Aorta (tissue), 5 donors: ENCODE measurements at regions of chr11 and their contacts with region 1.

Region 1: GRCh38 chr11:125345421-125346178 is 150.5 kb downstream of the FEZ1 start:
- DNase-seq: peak; percentile 86 to 92
- ATAC-seq: peak; percentile 86
- H3K4me3 ChIP-seq: no peak overlapping the region
- H3K27ac ChIP-seq: no peak overlapping the region
- H3K4me1 ChIP-seq: no peaks in the 10 kb centered on the region
- H3K27me3 ChIP-seq: no peaks in the 10 kb centered on the region

Region 2: GRCh38 chr11:125091247-125091876 is 254.2 kb before region 1 on chr11:
- intact Hi-C with region 1: no loop called
- DNase-seq: no peak
- ATAC-seq: peak; percentile 68
- H3K4me3 ChIP-seq: no peak overlapping the region
- H3K27ac ChIP-seq: no peak overlapping the region
- H3K4me1 ChIP-seq: peaks cover 0 to 3% of the 10 kb centered on the region in 2 donors
- H3K27me3 ChIP-seq: no peaks in the 10 kb centered on the region

Region 3: DNA sequence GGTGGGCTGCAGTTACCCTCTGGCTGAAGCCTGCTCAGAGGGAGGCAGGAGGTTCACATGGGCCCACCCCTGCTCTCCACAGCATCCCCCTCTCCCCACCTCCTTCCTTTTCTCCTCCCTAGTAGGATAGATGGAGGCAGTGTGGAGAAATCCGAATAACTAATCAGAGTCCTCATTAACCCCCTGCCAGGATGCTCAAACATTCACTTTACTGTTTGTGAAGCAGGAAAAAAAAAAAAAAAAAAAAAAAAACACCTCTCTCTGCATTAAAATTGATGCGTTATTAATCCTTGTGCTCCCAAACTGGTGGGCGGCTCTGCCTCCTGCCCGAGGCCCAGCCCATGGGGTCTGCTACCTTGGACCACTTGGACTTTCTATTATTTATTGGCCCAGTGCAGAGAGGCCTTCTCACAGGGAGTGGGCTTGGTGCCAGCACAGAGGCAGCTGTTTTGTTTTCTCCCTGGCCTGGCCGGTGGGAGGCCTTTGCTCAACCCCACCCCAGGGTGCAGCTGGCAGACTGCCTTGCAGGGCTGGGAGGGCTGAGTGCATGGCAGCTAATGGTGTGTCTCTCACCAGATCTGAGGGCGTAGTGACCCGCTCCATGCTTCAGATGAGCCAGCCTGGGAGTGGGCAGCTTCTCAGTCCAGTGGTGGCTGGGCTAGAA is 30.4 kb before region 1 on chr11:
- intact Hi-C with region 1: no loop called
- DNase-seq: no peak
- ATAC-seq: peak; percentile 40
- H3K4me3 ChIP-seq: no peak overlapping the region
- H3K27ac ChIP-seq: no peak overlapping the region
- H3K4me1 ChIP-seq: no peaks in the 10 kb centered on the region
- H3K27me3 ChIP-seq: no peaks in the 10 kb centered on the region

Region 4: GRCh38 chr11:125373426-125374391 is 28.1 kb after region 1 on chr11:
- intact Hi-C with region 1: loop called in 1 of 2 experiments (anchors 1 kb)
- DNase-seq: peak in 1 of 2 donors; percentile 57
- ATAC-seq: peak; percentile 11
- H3K4me3 ChIP-seq: no peak overlapping the region
- H3K27ac ChIP-seq: no peak overlapping the region
- H3K4me1 ChIP-seq: no peaks in the 10 kb centered on the region
- H3K27me3 ChIP-seq: no peaks in the 10 kb centered on the region

Region 5: GRCh38 chr11:125404776-125405435 is 59.3 kb after region 1 on chr11:
- intact Hi-C with region 1: loop called (anchors 5 kb)
- DNase-seq: peak; percentile 79 to 93
- ATAC-seq: peak; percentile 92
- H3K4me3 ChIP-seq: no peak overlapping the region
- H3K27ac ChIP-seq: no peak overlapping the region
- H3K4me1 ChIP-seq: no peaks in the 10 kb centered on the region
- H3K27me3 ChIP-seq: no peaks in the 10 kb centered on the region

Region 6: DNA sequence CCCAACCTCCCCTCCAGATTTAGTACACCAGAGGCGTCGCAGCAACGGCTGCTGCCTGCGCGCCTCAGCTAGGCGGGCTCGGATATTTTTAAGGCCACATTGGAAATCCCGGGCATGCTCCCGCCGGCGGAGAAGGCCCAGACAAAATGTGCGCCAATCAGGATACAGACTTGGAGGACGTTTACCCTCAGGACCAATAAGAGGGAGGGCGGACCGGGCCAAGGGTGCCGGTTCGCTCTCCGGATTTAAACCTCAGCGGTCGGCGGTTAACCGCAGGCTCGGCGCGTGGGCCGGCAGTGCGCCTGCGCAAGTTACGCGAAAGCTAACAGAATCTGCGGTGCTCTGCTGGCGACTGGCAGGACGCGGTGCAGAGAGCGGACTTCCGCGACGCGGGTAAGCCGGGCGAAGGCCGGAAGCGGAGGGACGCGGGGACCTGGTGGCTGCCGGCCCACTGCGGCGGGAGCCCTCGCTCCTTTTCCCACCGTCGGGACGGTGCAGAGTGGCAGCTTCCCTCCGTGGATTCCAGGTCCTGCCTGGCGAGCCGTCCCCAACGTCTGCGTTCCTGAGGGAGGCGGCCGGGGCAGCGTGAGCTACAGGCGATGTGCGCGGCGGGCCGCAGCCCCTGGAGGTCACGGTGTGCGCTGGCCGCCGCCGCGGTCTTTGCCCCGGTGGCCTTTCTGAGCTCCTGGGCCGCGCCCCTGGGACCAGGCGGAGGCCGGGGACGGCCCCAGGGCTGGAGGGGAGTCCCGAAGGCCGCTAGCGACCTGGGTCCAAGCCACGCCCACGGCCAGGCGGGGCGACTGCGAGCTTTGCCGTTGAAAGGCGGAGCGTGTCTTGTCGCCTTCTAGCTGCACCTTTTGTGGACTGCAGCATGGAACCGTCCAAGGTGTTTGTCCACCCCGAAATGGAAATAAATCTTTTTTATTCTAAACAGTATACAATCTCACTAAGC is 542.0 kb after region 1 on chr11 and contains the start of gene HYLS1:
- intact Hi-C with region 1: loop called in 1 of 2 experiments (anchors 5 kb)
- DNase-seq: peak; percentile 96 to 98
- ATAC-seq: peak; percentile 99
- H3K4me3 ChIP-seq: peak within 1 kb of the TSS; percentile 79 to 93
- H3K27ac ChIP-seq: peak within 1 kb of the TSS; percentile 15 to 86
- H3K4me1 ChIP-seq: no peaks in the 10 kb centered on the region
- H3K27me3 ChIP-seq: no peaks in the 10 kb centered on the region
- total RNA-seq, gene HYLS1: 3.3 to 3.6 TPM